ENCODE measurements at regions of chr17 and their contacts with region 1.

Region 1: GRCh38 chr17:68328604-68329285 is 37.5 kb downstream of the ARSG start:
- DNase-seq: no peak
- H3K4me3 Mint-ChIP-seq: no peak overlapping the region
- H3K27ac Mint-ChIP-seq: no peak overlapping the region
- H3K4me1 Mint-ChIP-seq: peaks cover 19% of the 10 kb centered on the region
- H3K27me3 Mint-ChIP-seq: no peaks in the 10 kb centered on the region

Region 2: GRCh38 chr17:68238164-68238872 is 90.4 kb before region 1 on chr17:
- CTCF ChIA-PET with region 1: no interaction called
- POLR2A ChIA-PET with region 1: no interaction called
- DNase-seq: peak; percentile 60
- H3K4me3 Mint-ChIP-seq: peak overlapping the region; percentile 70
- H3K27ac Mint-ChIP-seq: peak overlapping the region; percentile 98
- H3K4me1 Mint-ChIP-seq: peaks cover 56% of the 10 kb centered on the region
- H3K27me3 Mint-ChIP-seq: no peaks in the 10 kb centered on the region

Region 3: DNA sequence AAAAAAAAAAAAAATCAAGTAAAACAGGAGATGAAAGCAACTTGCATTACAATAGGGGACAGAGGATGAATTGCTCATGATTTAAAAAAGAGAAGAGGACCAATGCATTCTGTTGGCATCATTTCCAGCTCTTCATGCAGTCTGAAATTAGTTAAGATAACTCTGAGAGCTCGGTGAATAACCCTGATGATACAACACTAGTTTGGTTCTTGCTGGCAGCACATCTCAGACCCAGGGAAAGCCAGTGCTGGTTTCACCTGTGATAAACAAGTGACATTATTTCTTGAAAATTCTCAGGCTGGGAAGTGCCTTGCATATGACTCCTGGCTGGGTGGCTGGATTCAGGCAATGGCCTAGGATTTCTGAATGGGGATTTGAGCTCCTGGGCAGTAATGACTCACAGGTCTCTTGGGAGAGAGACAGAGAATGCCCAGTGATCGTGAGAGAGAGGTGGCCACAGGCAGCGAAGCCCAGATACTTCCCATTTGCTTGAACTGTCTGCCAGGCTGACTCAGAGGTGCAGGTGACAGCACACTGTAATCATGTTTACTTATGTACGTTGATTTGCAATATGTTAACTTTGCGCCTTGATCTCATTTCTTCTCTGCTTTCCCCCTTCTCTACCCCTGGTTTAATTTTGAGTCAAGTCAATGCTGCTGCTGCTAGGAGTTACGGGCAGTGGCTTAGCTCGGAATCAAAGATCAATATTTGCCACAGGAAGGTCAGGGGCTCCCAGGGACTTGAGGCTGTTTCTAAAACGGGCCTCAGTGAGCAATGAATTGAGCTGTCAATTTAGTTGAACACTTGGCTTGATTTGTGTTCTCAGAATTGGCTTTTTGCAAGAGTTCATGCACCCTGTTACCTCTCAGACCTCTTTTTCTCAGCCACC is 10.4 kb before region 1 on chr17:
- CTCF ChIA-PET with region 1: interaction called, 24 read pairs
- POLR2A ChIA-PET with region 1: no interaction called
- DNase-seq: no peak
- H3K4me3 Mint-ChIP-seq: no peak overlapping the region
- H3K27ac Mint-ChIP-seq: peak overlapping the region; percentile 37
- H3K4me1 Mint-ChIP-seq: peaks cover 29% of the 10 kb centered on the region
- H3K27me3 Mint-ChIP-seq: no peaks in the 10 kb centered on the region

Region 4: DNA sequence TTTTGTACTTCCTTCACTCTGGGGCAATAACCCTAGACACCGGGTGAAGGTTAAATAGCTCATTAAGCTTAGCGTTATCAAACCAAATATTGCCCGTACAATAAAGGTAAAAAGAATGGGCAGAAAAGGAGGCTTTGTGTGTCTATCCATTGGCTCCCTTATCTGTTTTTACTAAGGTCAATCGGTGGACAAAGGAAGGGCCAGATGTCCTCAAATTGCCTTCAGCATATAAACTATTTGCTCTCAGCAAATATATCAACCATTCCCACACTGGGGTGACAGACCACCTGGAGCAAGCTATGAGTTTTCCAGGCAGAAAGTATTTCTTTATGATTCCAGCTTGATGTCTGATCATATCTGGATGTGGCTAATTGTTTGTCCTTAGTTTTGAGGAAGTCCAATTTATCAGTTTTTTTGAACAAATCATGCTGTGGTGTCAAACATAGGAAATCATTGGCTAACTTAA is 153.9 kb after region 1 on chr17:
- CTCF ChIA-PET with region 1: no interaction called
- POLR2A ChIA-PET with region 1: no interaction called
- DNase-seq: no peak
- H3K4me3 Mint-ChIP-seq: no peak overlapping the region
- H3K27ac Mint-ChIP-seq: no peak overlapping the region
- H3K4me1 Mint-ChIP-seq: peaks cover 20% of the 10 kb centered on the region
- H3K27me3 Mint-ChIP-seq: peaks cover 47% of the 10 kb centered on the region